Activated CD4-positive, alpha-beta memory T cell treated with anti-CD3 and anti-CD28 coated beads for 36 hours (primary cell): ENCODE measurements at regions of chr20 and their contacts with region 1.

Region 1: GRCh38 chr20:35741892-35742740 is at the start of gene RBM39:
- DNase-seq: peak; percentile 100
- H3K4me3 Mint-ChIP-seq: peak within 1 kb of the TSS; percentile 96
- H3K27ac Mint-ChIP-seq: peak within 1 kb of the TSS; percentile 98
- H3K4me1 Mint-ChIP-seq: peaks cover 38% of the 10 kb centered on the region
- H3K27me3 Mint-ChIP-seq: peaks cover 2% of the 10 kb centered on the region
- total RNA-seq, gene RBM39: 243 to 259 TPM

Region 2: DNA sequence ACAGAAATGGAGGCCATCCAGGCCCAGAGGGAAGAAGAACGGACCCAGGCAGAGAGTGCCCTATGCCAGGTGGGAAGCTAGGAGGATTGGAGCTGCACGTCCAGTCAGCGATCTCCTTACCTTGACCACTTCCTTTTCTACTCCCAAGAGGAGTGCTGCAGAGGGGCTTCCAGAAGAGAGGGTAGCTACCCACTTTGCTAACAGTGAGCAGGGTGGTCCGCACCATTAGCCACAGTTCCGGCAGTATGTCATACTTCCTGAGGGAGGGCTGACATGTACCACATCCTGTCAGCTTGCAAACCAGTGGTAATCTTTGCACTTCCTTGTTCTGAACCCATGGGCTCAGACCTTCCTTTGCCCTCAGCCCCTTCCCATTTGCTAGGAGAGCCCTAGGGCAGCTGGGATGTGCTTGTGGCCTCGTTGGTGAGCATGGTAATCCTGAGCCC is 251.4 kb before region 1 on chr20:
- CTCF ChIA-PET with region 1: no interaction called
- POLR2A ChIA-PET with region 1: interaction called, 10 read pairs
- intact Hi-C with region 1: no loop called
- DNase-seq: peak; percentile 78
- H3K4me3 Mint-ChIP-seq: peak overlapping the region; percentile 99
- H3K27ac Mint-ChIP-seq: peak overlapping the region; percentile 99
- H3K4me1 Mint-ChIP-seq: peaks cover 39% of the 10 kb centered on the region
- H3K27me3 Mint-ChIP-seq: no peaks in the 10 kb centered on the region

Region 3: DNA sequence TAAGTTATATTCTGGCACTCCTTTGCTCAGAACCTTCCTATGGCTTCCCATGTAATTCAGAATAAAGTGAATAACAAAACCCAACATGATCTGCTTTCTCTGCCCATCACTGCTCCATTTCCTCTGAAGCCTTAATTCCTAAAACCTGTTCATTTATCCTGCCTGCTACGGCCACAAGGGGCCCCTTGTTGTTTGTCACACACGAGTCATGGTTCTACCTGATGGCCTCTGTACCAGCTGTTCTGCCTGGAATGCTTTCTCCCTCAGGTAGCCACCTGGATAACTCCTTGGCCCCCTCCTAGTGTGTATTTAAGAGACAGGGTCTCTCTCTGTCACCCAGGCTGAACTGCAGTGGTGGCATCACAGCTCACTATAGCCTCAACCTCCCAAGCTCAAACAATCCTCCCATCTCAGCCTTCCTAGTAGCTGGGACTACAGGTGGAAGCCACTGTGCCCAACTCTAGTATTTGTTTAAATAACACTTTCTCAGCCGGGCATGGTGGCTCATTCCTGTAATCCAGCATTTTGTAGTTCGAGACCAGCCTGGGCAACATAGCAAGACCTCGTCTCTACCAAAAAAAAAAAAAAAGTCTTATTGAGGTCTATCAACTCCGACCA is 173.4 kb before region 1 on chr20:
- CTCF ChIA-PET with region 1: no interaction called
- POLR2A ChIA-PET with region 1: no interaction called
- intact Hi-C with region 1: no loop called
- DNase-seq: peak; percentile 16
- H3K4me3 Mint-ChIP-seq: no peak overlapping the region
- H3K27ac Mint-ChIP-seq: no peak overlapping the region
- H3K4me1 Mint-ChIP-seq: no peaks in the 10 kb centered on the region
- H3K27me3 Mint-ChIP-seq: peaks cover 2% of the 10 kb centered on the region

Region 4: DNA sequence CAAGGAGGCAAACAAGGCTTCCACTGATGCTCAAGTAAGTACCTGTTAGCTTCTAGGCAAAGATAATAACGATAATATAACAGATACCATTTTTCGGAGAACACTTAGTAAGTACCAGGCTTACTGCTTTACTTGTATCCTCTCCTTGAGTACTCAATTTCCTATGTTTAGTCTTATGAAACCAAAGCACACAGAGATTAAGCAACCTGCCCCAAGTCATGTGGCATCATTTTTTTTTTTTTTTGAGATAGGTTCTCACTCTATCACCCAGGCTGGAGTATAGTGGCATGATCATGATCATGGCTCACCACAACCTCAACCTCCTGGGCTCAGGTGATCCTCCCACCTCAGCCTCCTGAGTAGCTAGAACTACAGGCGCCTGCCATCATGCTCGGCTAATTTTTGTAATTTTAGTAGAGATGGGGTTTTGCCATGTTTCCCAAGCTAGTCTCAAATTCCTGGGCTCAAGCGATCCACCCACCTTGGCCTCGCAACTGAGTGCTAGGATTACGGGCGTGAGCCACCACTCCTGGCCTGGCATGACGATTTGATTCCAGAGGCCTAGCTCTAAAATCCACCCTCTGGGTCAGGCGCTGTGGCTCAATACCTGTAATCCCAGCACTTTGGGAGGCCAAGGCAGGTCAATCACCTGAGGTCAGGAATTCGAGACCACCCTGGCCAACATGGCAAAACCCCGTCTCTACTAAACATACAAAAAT is 112.5 kb before region 1 on chr20:
- CTCF ChIA-PET with region 1: no interaction called
- POLR2A ChIA-PET with region 1: no interaction called
- intact Hi-C with region 1: no loop called
- DNase-seq: no peak
- H3K4me3 Mint-ChIP-seq: no peak overlapping the region
- H3K27ac Mint-ChIP-seq: no peak overlapping the region
- H3K4me1 Mint-ChIP-seq: no peaks in the 10 kb centered on the region
- H3K27me3 Mint-ChIP-seq: no peaks in the 10 kb centered on the region

Region 5: DNA sequence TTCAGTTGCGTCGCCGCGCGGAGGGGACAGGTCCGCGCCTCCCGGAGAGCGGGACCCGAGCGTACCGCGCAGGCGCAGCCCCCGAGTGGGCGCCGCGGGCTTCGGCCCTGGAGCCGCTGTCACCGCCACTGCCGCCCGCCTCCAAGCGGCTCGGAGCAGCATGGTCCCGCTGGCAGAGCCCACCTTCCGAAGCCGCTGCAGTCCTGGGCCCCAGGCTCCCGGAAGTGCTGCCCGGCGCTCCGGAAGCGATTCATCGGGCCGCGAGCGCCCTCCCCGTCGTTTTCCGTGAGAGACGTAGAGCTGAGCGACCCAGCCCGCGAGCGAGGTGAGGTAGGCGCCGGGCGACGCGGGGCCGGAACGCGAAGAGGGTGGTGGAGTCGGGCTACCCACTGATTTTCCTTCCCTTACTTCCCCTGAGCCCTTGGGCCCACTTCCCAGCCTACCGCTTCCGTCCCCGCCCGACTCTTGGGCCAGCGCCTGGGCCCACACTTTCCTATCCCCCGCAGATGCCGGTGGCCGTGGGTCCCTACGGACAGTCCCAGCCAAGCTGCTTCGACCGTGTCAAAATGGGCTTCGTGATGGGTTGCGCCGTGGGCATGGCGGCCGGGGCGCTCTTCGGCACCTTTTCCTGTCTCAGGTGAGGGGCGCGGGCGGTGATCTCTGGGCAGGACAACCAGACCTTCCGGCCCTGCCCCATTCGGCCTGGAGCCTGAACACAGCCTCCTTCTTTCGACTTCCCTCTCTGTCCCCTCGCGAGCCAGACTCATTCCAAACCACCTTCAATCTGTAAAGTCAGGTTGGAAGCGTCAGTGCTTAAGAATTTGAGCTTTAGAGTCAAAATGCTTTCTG is 42.8 kb before region 1 on chr20 and contains the starts of genes NFS1 and ROMO1:
- CTCF ChIA-PET with region 1: interaction called, 3 read pairs
- POLR2A ChIA-PET with region 1: interaction called, 44 read pairs
- intact Hi-C with region 1: loop called (anchors 1 kb)
- DNase-seq: peak; percentile 91
- H3K4me3 Mint-ChIP-seq: peak within 1 kb of the TSS; percentile 88
- H3K27ac Mint-ChIP-seq: peak within 1 kb of the TSS; percentile 91
- H3K4me1 Mint-ChIP-seq: peaks cover 50% of the 10 kb centered on the region
- H3K27me3 Mint-ChIP-seq: no peaks in the 10 kb centered on the region
- total RNA-seq, gene NFS1: 36.9 to 40.8 TPM
- total RNA-seq, gene ROMO1: 141 to 142 TPM

Region 6: DNA sequence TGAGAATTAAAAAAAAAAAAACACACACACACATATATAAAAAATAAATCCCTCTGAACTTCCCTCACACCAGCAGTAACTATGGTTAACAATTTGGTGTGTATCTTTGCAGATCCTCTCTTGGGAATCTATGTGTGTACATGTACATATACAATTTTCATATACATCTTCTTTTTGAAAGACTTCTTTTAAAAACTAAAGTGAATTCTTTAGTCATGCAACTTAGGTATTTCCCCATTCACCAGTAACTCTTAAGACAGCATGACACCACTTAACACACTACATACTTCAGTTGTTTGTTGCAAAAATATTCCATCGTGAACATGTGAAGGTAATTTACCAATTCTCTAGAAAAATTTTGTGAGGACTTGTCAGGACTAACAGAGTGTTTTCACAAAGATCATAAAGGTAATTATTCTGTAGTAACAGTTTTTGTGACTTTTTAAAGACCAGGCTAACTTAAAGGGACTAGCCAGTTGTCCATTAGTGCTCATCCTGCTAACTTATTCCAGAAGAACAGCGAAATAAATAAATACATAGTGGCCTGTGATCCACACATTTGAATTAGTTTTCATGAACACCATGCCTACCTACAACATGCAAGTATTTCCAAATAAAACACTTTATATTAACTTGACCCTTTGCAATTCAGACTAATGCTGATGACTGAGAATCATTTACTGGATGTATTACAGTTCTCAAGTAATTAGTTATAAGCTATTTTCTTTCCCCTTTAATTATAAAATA is 12.1 kb before region 1 on chr20:
- CTCF ChIA-PET with region 1: interaction called, 6 read pairs
- POLR2A ChIA-PET with region 1: interaction called, 10 read pairs
- intact Hi-C with region 1: no loop called
- DNase-seq: no peak
- H3K4me3 Mint-ChIP-seq: no peak overlapping the region
- H3K27ac Mint-ChIP-seq: peak overlapping the region; percentile 45
- H3K4me1 Mint-ChIP-seq: peaks cover 46% of the 10 kb centered on the region
- H3K27me3 Mint-ChIP-seq: no peaks in the 10 kb centered on the region

Region 7: DNA sequence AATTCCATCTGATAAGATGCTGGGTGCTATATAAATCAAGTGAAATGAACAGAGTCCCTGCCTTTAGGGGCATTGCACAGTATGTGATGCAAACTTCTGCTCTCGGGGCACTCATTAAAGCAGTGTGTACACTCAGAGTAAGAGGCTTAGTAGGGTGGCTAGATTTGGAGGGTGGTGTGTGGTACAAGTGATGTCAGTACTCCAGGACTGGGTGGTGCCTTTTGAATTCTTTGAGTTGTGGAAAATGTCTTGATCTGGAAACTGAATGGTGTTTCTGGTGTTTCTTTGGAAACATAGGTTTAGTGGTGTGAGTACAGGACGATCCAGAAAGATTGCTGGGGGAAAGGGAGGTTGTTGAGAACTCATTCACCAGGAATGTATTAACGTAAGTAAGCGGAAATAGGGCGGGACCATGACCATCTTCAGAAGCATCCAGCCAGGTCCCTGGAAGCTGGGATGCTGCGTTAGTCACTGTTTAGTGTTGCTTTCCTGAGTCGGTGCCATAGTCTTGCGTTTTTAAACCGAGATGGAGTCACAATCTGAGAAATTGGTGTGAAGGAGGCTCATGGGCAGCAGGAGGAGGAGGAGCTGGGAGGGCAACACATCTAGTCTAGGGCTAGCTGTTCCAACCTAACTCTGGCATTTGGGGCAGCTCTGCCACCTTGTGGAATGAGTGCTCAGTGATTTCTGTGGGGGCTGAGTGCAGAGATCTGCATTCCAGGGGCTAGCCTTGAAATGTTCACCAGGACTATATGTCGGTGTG is 141.8 kb after region 1 on chr20:
- CTCF ChIA-PET with region 1: interaction called, 7 read pairs
- POLR2A ChIA-PET with region 1: no interaction called
- intact Hi-C with region 1: loop called (anchors 5 kb)
- DNase-seq: peak; percentile 75
- H3K4me3 Mint-ChIP-seq: no peak overlapping the region
- H3K27ac Mint-ChIP-seq: no peak overlapping the region
- H3K4me1 Mint-ChIP-seq: peaks cover 8% of the 10 kb centered on the region
- H3K27me3 Mint-ChIP-seq: no peaks in the 10 kb centered on the region